ENCODE measurements at regions of chr1 and their contacts with region 1.

Region 1: DNA sequence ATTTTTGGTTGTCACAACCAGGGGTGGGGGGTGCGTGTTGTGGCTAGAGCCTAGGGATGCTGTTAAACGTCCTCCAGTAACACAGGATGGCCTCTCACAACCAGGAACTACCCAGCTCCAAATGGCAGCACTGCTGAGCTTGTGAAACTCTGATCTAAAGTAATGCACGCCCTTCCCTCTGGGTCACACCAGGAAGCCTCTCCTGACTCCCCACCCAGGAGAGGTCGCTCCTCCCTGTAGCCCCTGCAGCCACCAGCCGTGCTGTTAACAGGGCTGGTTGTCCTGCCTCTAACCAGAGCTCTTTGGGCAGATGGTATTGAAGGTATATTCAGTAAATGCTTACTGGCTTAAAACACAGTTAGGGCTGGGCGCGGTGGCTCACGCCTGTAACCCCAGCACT is 73.2 kb downstream of the NKAIN1 start:
- DNase-seq: no peak
- ATAC-seq: no peak
- H3K4me3 ChIP-seq: no peak overlapping the region
- H3K27ac ChIP-seq: no peak overlapping the region
- H3K4me1 ChIP-seq: peaks cover 11 to 14% of the 10 kb centered on the region in 2 donors
- H3K27me3 ChIP-seq: no peaks in the 10 kb centered on the region
- CTCF ChIP-seq: no peak

Region 2: GRCh38 chr1:30971496-30971895 is 195.0 kb before region 1 on chr1:
- intact Hi-C with region 1: no loop called
- DNase-seq: no peak
- ATAC-seq: no peak
- H3K4me3 ChIP-seq: no peak overlapping the region
- H3K27ac ChIP-seq: peak overlapping the region in 1 of 2 donors; percentile 59
- H3K4me1 ChIP-seq: peaks cover 12 to 35% of the 10 kb centered on the region in 2 donors
- H3K27me3 ChIP-seq: no peaks in the 10 kb centered on the region
- CTCF ChIP-seq: no peak

Region 3: GRCh38 chr1:30984165-30984889 is 182.1 kb before region 1 on chr1:
- intact Hi-C with region 1: no loop called
- DNase-seq: peak in 1 of 4 donors; percentile 54
- ATAC-seq: peak; percentile 43
- H3K4me3 ChIP-seq: no peak overlapping the region
- H3K27ac ChIP-seq: peak overlapping the region in 1 of 2 donors; percentile 5
- H3K4me1 ChIP-seq: peaks cover 27 to 58% of the 10 kb centered on the region in 2 donors
- H3K27me3 ChIP-seq: no peaks in the 10 kb centered on the region
- CTCF ChIP-seq: no peak

Region 4: GRCh38 chr1:31413405-31414125 is 247.1 kb after region 1 on chr1:
- intact Hi-C with region 1: loop called in 1 of 2 experiments (anchors 10 kb)
- DNase-seq: peak; percentile 49 to 93 (median 73)
- ATAC-seq: peak; percentile 80
- H3K4me3 ChIP-seq: peak overlapping the region; percentile 75 to 79
- H3K27ac ChIP-seq: peak overlapping the region; percentile 68 to 82
- H3K4me1 ChIP-seq: peaks cover 0 to 20% of the 10 kb centered on the region in 2 donors
- H3K27me3 ChIP-seq: peaks cover 5 to 46% of the 10 kb centered on the region in 2 donors
- CTCF ChIP-seq: no peak

Measured in left lung (tissue), 14 donors.